Mammary epithelial cell (primary cell): ENCODE measurements at regions of chr6 and their contacts with region 1.

Region 1: GRCh38 chr6:28586962-28587745 is 61.5 kb downstream of the GPX5 start:
- DNase-seq: peak; percentile 83
- H3K4me3 ChIP-seq: peak overlapping the region; percentile 78 to 89 (median 84)
- H3K27ac ChIP-seq: peak overlapping the region; percentile 76
- H3K4me1 ChIP-seq: peaks cover 21% of the 10 kb centered on the region
- H3K27me3 ChIP-seq: no peaks in the 10 kb centered on the region
- CTCF ChIP-seq: no peak

Region 2: GRCh38 chr6:28252009-28252975 is 334.9 kb before region 1 on chr6 and contains the start of gene ZKSCAN4:
- CTCF ChIA-PET with region 1: no interaction called
- dilution Hi-C with region 1: no loop called
- in situ Hi-C with region 1: no loop called
- intact Hi-C with region 1: loop called (anchors 1 kb)
- DNase-seq: peak; percentile 82
- H3K4me3 ChIP-seq: peak within 1 kb of the TSS; percentile 87 to 93 (median 89)
- H3K27ac ChIP-seq: peak within 1 kb of the TSS; percentile 8
- H3K4me1 ChIP-seq: peaks cover 8% of the 10 kb centered on the region
- H3K27me3 ChIP-seq: no peaks in the 10 kb centered on the region
- CTCF ChIP-seq: no peak
- total RNA-seq, gene ZKSCAN4: 3.6 to 5.8 TPM

Region 3: GRCh38 chr6:28489366-28490204 is 97.6 kb before region 1 on chr6:
- CTCF ChIA-PET with region 1: interaction called, 10 read pairs
- dilution Hi-C with region 1: no loop called
- in situ Hi-C with region 1: no loop called
- intact Hi-C with region 1: no loop called
- DNase-seq: no peak
- H3K4me3 ChIP-seq: peak overlapping the region; percentile 49 to 70 (median 55)
- H3K27ac ChIP-seq: peak overlapping the region; percentile 51
- H3K4me1 ChIP-seq: no peaks in the 10 kb centered on the region
- H3K27me3 ChIP-seq: no peaks in the 10 kb centered on the region
- CTCF ChIP-seq: no peak

Region 4: GRCh38 chr6:28597217-28598005 is 10.3 kb after region 1 on chr6:
- CTCF ChIA-PET with region 1: no interaction called
- dilution Hi-C with region 1: no loop called
- in situ Hi-C with region 1: no loop called
- intact Hi-C with region 1: loop called (anchors 1 kb)
- DNase-seq: peak; percentile 79
- H3K4me3 ChIP-seq: peak overlapping the region; percentile 46 to 56 (median 50)
- H3K27ac ChIP-seq: peak overlapping the region; percentile 12
- H3K4me1 ChIP-seq: no peaks in the 10 kb centered on the region
- H3K27me3 ChIP-seq: no peaks in the 10 kb centered on the region
- CTCF ChIP-seq: no peak

Region 5: GRCh38 chr6:28657769-28658465 is 70.8 kb after region 1 on chr6:
- CTCF ChIA-PET with region 1: interaction called, 5 read pairs
- dilution Hi-C with region 1: no loop called
- in situ Hi-C with region 1: loop called in 1 of 2 experiments (anchors 5 kb)
- intact Hi-C with region 1: no loop called
- DNase-seq: peak; percentile 44
- H3K4me3 ChIP-seq: peak overlapping the region; percentile 42 to 92 (median 49)
- H3K27ac ChIP-seq: no peak overlapping the region
- H3K4me1 ChIP-seq: peaks cover 10% of the 10 kb centered on the region
- H3K27me3 ChIP-seq: peaks cover 6% of the 10 kb centered on the region
- CTCF ChIP-seq: no peak